GM23248 (cell line): ENCODE measurements at regions of chr12 and their contacts with region 1.

Region 1: GRCh38 chr12:61538951-61539350 is 721.3 kb upstream of the USP15 start:
- DNase-seq: no peak
- H3K4me3 ChIP-seq: no peak overlapping the region
- H3K27ac ChIP-seq: no peak overlapping the region
- H3K4me1 ChIP-seq: no peaks in the 10 kb centered on the region
- H3K27me3 ChIP-seq: no peaks in the 10 kb centered on the region

Region 2: GRCh38 chr12:61629702-61630101 is 90.8 kb after region 1 on chr12:
- in situ Hi-C with region 1: loop called (anchors 25 kb)
- DNase-seq: no peak
- H3K4me3 ChIP-seq: no peak overlapping the region
- H3K27ac ChIP-seq: no peak overlapping the region
- H3K4me1 ChIP-seq: no peaks in the 10 kb centered on the region
- H3K27me3 ChIP-seq: no peaks in the 10 kb centered on the region